SK-N-SH (cell line): ENCODE measurements at regions of chr14 and their contacts with region 1.

Region 1: DNA sequence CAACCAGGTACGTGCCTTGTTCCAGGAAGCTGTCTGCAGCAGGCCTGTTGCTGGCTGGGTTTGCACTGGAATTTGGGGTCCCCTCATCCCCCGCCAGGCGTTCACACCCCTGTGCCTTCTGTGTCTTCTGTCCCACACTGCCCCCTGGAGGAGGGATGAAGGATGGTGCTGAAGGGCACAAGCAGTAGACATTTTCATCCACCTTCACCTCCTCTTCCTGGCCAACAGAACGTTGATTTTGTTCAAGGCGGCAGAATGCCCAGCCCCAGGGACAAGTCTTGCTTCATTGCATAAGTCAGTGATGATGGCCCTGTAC is 122.1 kb downstream of the CALM1 start:
- DNase-seq: no peak
- H3K4me3 ChIP-seq: no peak overlapping the region
- H3K27ac ChIP-seq: no peak overlapping the region
- H3K4me1 ChIP-seq: peaks cover 20 to 41% of the 10 kb centered on the region in 2 experiments; a peak in 3 of 4 replicates
- H3K27me3 ChIP-seq: no peaks in the 10 kb centered on the region
- CTCF ChIP-seq: peak; percentile 58
- EP300 ChIP-seq: no peak
- RAD21 ChIP-seq: peak; percentile 66

Region 2: DNA sequence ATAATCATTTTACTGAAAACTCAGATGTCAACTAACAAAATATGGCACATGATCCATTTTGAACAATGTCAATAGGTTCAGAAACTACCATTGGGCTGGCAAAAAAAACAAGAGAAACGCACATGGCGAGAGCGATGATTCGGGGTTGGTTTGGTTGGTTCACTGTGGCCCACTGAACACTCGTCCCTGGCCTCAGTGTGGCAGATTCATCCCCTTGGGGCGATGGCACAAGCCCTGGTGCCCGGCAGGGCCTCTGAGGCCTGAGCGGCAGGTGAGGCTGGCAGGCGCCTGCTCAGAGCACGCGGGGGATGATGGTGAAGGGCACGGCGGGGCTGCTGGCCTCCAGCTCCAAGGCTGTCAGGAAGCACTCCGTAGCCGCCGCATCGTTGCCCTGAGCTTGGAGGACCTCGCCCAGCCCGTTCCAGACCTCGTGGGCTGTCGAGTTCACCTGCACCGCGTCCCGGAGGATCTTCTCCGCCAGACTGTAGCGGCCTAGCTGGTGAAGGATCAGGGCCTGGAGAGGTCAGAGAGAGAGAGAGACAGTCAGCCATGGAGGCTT is 22.3 kb after region 1 on chr14:
- CTCF ChIA-PET with region 1: interaction called, 10 read pairs
- POLR2A ChIA-PET with region 1: interaction called, 14 read pairs
- DNase-seq: no peak
- H3K4me3 ChIP-seq: no peak overlapping the region
- H3K27ac ChIP-seq: no peak overlapping the region
- H3K4me1 ChIP-seq: peaks cover 0 to 25% of the 10 kb centered on the region in 2 experiments; a peak in 2 of 4 replicates
- H3K27me3 ChIP-seq: no peaks in the 10 kb centered on the region
- CTCF ChIP-seq: no peak
- EP300 ChIP-seq: no peak
- RAD21 ChIP-seq: no peak

Region 3: GRCh38 chr14:90545966-90546751 is 27.3 kb after region 1 on chr14:
- CTCF ChIA-PET with region 1: interaction called, 10 read pairs
- POLR2A ChIA-PET with region 1: interaction called, 14 read pairs
- DNase-seq: peak; percentile 76
- H3K4me3 ChIP-seq: no peak overlapping the region
- H3K27ac ChIP-seq: peak overlapping the region in 1 of 2 experiments; percentile 94; a peak in 2 of 4 replicates
- H3K4me1 ChIP-seq: peaks cover 6 to 72% of the 10 kb centered on the region in 2 experiments
- H3K27me3 ChIP-seq: no peaks in the 10 kb centered on the region
- CTCF ChIP-seq: no peak
- EP300 ChIP-seq: peak in 1 of 2 experiments; percentile 38; a peak in 1 of 4 replicates
- RAD21 ChIP-seq: peak; percentile 34; the same call in 1 of the 2 replicates